ENCODE measurements at regions of chr2 and their contacts with region 1.

Region 1: DNA sequence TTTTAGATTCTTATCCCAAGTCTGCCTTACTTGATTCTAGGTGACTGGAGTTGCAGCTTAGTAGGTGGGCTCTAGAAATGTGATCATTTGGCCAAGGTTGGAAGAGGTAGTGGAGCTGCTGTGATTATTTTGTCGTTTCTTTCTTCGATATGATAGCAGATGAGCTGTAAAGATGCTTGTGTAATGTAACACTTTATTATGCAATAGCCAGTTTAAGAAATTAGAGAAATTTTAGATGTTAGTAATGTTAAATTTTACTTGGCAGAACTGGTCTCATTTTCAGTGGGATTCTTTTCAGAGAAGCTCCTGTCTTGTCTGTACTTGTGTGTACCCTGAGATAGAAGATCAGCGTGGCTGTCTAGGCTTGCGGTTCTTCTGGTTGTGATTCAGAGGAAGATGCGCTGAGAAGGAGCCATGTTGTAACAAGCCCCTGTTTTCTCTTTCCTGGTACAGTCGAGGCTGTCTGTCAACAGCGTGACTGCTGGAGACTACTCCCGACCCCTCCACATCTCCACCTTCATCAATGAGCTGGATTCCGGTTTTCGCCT is 9.3 kb downstream of the TSN start:
- DNase-seq: no peak
- H3K4me3 ChIP-seq: no peak overlapping the region
- H3K27ac ChIP-seq: no peak overlapping the region
- H3K4me1 ChIP-seq: no peaks in the 10 kb centered on the region
- H3K27me3 ChIP-seq: no peaks in the 10 kb centered on the region
- CTCF ChIP-seq: no peak
- POLR2A ChIP-seq: no peak

Region 2: DNA sequence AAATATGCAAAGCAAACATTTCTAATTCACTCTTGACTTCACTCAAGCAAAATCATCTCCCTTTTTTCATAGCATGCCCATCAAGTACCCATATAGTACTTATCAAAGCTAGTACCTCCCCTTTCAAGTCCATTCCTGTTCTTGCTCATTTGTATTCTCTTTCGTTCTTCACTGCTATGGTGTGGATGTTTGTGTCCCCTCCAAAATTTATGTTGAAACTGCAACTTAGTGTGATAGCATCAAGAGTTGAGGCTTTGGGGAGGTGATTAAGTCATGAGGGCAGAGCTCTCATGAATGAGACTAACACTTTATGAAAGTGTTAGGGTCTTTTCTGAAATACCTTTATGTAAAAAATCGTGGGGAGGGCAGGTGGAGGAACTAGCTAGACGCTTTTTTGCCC is 181.2 kb before region 1 on chr2:
- intact Hi-C with region 1: no loop called
- DNase-seq: no peak
- H3K4me3 ChIP-seq: no peak overlapping the region
- H3K27ac ChIP-seq: no peak overlapping the region
- H3K4me1 ChIP-seq: no peaks in the 10 kb centered on the region
- H3K27me3 ChIP-seq: no peaks in the 10 kb centered on the region
- CTCF ChIP-seq: no peak
- POLR2A ChIP-seq: no peak

Region 3: GRCh38 chr2:121649596-121650314 is 115.0 kb before region 1 on chr2:
- intact Hi-C with region 1: loop called (anchors 10 kb)
- DNase-seq: peak; percentile 95 to 97
- H3K4me3 ChIP-seq: peak overlapping the region; percentile 96 to 99
- H3K27ac ChIP-seq: peak overlapping the region; percentile 96 to 97
- H3K4me1 ChIP-seq: peaks cover 0 to 8% of the 10 kb centered on the region in 2 donors
- H3K27me3 ChIP-seq: no peaks in the 10 kb centered on the region
- CTCF ChIP-seq: peak in 1 of 4 experiments; percentile 6
- POLR2A ChIP-seq: peak in 1 of 2 donors; percentile 16